T-cell (primary cell): ENCODE measurements at regions of chr3 and their contacts with region 1.

Region 1: GRCh38 chr3:188306435-188307005 is 152.6 kb downstream of the LPP start:
- DNase-seq: no peak
- ATAC-seq: no peak
- H3K4me3 ChIP-seq: no peak overlapping the region
- H3K4me3 Mint-ChIP-seq: no peak overlapping the region
- H3K27ac ChIP-seq: no peak overlapping the region
- H3K27ac Mint-ChIP-seq: no peak overlapping the region
- H3K4me1 ChIP-seq: peaks cover 3 to 4% of the 10 kb centered on the region in 2 experiments
- H3K4me1 Mint-ChIP-seq: peaks cover 18 to 34% (median 32%) of the 10 kb centered on the region in 3 donors
- H3K27me3 ChIP-seq: no peaks in the 10 kb centered on the region
- H3K27me3 Mint-ChIP-seq: no peaks in the 10 kb centered on the region

Region 2: GRCh38 chr3:188286087-188286513 is 20.4 kb before region 1 on chr3:
- CTCF ChIA-PET with region 1: no interaction called
- POLR2A ChIA-PET with region 1: interaction called in 1 of 2 experiments, 10 read pairs
- DNase-seq: no peak
- ATAC-seq: no peak
- H3K4me3 ChIP-seq: no peak overlapping the region
- H3K4me3 Mint-ChIP-seq: no peak overlapping the region
- H3K27ac ChIP-seq: no peak overlapping the region
- H3K27ac Mint-ChIP-seq: no peak overlapping the region
- H3K4me1 ChIP-seq: peaks cover 3 to 12% of the 10 kb centered on the region in 2 experiments
- H3K4me1 Mint-ChIP-seq: peaks cover 26 to 38% (median 27%) of the 10 kb centered on the region in 3 donors
- H3K27me3 ChIP-seq: no peaks in the 10 kb centered on the region
- H3K27me3 Mint-ChIP-seq: no peaks in the 10 kb centered on the region